ENCODE measurements at regions of chr12 and their contacts with region 1.

Region 1: DNA sequence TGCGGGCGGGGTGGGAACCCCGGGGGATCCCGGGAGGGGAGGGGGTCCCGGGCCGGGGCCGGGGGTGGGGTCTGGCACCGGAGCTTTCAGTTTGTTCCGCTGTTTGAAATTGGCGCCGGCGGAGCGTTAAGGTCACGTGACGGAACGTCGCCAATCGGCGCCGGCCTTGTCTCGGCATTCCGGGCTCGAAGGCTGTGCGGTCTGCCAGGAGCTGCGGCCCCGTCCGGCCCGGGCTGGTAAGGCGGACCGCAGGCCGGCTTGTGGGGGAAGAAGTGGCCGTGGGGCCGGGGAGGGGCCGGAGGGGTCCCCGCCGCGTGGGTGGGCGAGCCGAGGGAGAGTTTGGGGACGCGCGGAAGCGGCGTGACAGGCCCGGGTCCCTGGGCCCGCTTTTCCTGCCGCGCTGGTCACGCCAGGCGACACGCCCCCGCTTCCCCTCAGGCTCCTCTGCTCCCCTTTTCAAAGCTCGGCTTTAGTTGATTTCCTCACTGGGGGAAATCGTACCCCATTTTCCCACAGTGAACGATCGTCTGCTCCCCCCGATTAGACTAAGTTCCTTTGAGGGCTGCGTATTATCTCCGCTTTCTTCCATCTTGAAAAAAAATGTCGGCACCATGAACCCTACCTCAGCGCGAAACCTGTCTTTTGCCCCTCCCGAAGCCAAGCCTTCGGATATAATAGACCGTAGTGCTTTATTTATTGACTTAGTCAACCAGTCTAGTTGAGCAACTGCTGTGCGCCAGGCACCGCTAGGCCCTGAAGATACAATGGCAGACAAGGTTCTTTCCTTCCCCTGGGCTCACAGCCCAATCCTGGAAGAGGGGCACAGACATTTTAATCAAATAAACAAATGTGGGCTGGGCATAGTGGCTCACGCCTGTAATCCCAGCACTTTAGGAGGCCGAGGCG is at the starts of genes FOXM1 and RHNO1:
- DNase-seq: peak; percentile 96
- H3K4me3 ChIP-seq: peak within 1 kb of the TSS; percentile 61 to 69
- H3K27ac ChIP-seq: peak within 1 kb of the TSS; percentile 80 to 87
- H3K4me1 ChIP-seq: peaks cover 8 to 10% of the 10 kb centered on the region in 2 experiments; a peak in 2 of 4 replicates
- H3K27me3 ChIP-seq: no peaks in the 10 kb centered on the region
- CTCF ChIP-seq: 0 out of 2 replicates have a peak, but pooled peaks have one; percentile 6
- EP300 ChIP-seq: no peak
- RAD21 ChIP-seq: no peak
- polyA plus RNA-seq, gene FOXM1: 17.0 and 29.9 TPM in 2 replicates
- polyA plus RNA-seq, gene RHNO1: 28.9 and 39.5 TPM in 2 replicates

Region 2: GRCh38 chr12:2583091-2583497 is 294.2 kb before region 1 on chr12:
- CTCF ChIA-PET with region 1: no interaction called
- POLR2A ChIA-PET with region 1: no interaction called
- DNase-seq: peak; percentile 92
- H3K4me3 ChIP-seq: peak overlapping the region in 1 of 2 experiments; percentile 26; a peak in 2 of 4 replicates
- H3K27ac ChIP-seq: no peak overlapping the region
- H3K4me1 ChIP-seq: peaks cover 0 to 24% of the 10 kb centered on the region in 2 experiments; a peak in 1 of 4 replicates
- H3K27me3 ChIP-seq: no peaks in the 10 kb centered on the region
- CTCF ChIP-seq: peak; percentile 76
- EP300 ChIP-seq: no peak; a peak in 1 of 4 replicates
- RAD21 ChIP-seq: peak; percentile 87

Region 3: GRCh38 chr12:2853626-2854025 is 23.7 kb before region 1 on chr12:
- CTCF ChIA-PET with region 1: interaction called, 16 read pairs
- POLR2A ChIA-PET with region 1: no interaction called
- DNase-seq: peak; percentile 93
- H3K4me3 ChIP-seq: no peak overlapping the region; a peak in 1 of 4 replicates
- H3K27ac ChIP-seq: no peak overlapping the region
- H3K4me1 ChIP-seq: no peaks in the 10 kb centered on the region
- H3K27me3 ChIP-seq: no peaks in the 10 kb centered on the region
- CTCF ChIP-seq: peak; percentile 89
- EP300 ChIP-seq: no peak
- RAD21 ChIP-seq: peak; percentile 64

Measured in SK-N-SH (cell line).